Endothelial cell of umbilical vein (primary cell): ENCODE measurements at regions of chr12 and their contacts with region 1.

Region 1: GRCh38 chr12:2023365-2023764 is 19.1 kb upstream of the DCP1B start:
- DNase-seq: no peak
- H3K4me3 ChIP-seq: no peak overlapping the region
- H3K27ac ChIP-seq: no peak overlapping the region
- H3K4me1 ChIP-seq: no peaks in the 10 kb centered on the region
- H3K27me3 ChIP-seq: peaks cover 36 to 38% of the 10 kb centered on the region in 2 experiments
- CTCF ChIP-seq: no peak
- POLR2A ChIP-seq: no peak

Region 2: GRCh38 chr12:1966561-1967226 is 56.7 kb before region 1 on chr12:
- CTCF ChIA-PET with region 1: no interaction called
- POLR2A ChIA-PET with region 1: no interaction called
- dilution Hi-C with region 1: loop called (anchors 10 kb)
- intact Hi-C with region 1: no loop called
- DNase-seq: no peak
- H3K4me3 ChIP-seq: no peak overlapping the region
- H3K27ac ChIP-seq: no peak overlapping the region
- H3K4me1 ChIP-seq: no peaks in the 10 kb centered on the region
- H3K27me3 ChIP-seq: no peaks in the 10 kb centered on the region
- CTCF ChIP-seq: no peak
- POLR2A ChIP-seq: no peak

Region 3: GRCh38 chr12:2267703-2268501 is 244.5 kb after region 1 on chr12:
- CTCF ChIA-PET with region 1: no interaction called
- POLR2A ChIA-PET with region 1: no interaction called
- dilution Hi-C with region 1: no loop called
- intact Hi-C with region 1: no loop called
- DNase-seq: no peak
- H3K4me3 ChIP-seq: no peak overlapping the region
- H3K27ac ChIP-seq: no peak overlapping the region
- H3K4me1 ChIP-seq: no peaks in the 10 kb centered on the region
- H3K27me3 ChIP-seq: no peaks in the 10 kb centered on the region
- CTCF ChIP-seq: no peak
- POLR2A ChIP-seq: no peak